ENCODE measurements at regions of chr20 and their contacts with region 1.

Region 1: DNA sequence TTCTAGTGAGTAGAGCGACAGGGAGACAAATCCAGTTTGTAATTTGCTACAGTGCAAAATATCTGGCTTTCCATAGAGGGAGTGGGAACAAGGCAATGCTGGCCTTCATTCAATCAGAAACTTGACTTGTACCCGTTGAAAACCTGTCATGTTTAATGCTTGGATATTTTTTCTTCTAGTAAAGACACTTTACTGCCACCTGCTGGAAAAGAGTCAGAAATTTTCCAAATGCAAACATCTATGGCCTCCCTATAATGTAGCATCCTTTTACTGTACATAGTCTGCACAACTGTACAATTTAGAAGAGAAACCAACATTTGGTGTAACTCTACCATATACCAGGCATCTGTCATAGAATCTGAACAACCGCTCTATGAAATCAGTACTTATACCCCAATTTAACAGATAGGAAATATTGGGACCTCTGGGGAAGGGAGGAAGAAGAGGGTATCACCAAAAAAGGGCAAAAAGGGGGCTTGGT is 16.7 kb upstream of the TBC1D20 start:
- DNase-seq: no peak
- H3K4me3 ChIP-seq: no peak overlapping the region
- H3K27ac ChIP-seq: no peak overlapping the region
- H3K4me1 ChIP-seq: no peaks in the 10 kb centered on the region
- H3K27me3 ChIP-seq: no peaks in the 10 kb centered on the region
- CTCF ChIP-seq: peak in 2 of 3 experiments; percentile 43 to 51; a peak in 2 of 4 replicates
- EP300 ChIP-seq: no peak
- POLR2A ChIP-seq: no peak
- RAD21 ChIP-seq: peak; percentile 50 to 60

Region 2: GRCh38 chr20:362271-363254 is 116.4 kb before region 1 on chr20:
- CTCF ChIA-PET with region 1: interaction called, 20 read pairs
- POLR2A ChIA-PET with region 1: interaction called, 3 read pairs
- DNase-seq: no peak
- H3K4me3 ChIP-seq: no peak overlapping the region
- H3K27ac ChIP-seq: no peak overlapping the region
- H3K4me1 ChIP-seq: no peaks in the 10 kb centered on the region; a peak in 2 of 7 replicates
- H3K27me3 ChIP-seq: no peaks in the 10 kb centered on the region
- CTCF ChIP-seq: peak; percentile 44 to 54 (median 49)
- EP300 ChIP-seq: no peak
- POLR2A ChIP-seq: no peak
- RAD21 ChIP-seq: peak; percentile 44 to 58

Region 3: DNA sequence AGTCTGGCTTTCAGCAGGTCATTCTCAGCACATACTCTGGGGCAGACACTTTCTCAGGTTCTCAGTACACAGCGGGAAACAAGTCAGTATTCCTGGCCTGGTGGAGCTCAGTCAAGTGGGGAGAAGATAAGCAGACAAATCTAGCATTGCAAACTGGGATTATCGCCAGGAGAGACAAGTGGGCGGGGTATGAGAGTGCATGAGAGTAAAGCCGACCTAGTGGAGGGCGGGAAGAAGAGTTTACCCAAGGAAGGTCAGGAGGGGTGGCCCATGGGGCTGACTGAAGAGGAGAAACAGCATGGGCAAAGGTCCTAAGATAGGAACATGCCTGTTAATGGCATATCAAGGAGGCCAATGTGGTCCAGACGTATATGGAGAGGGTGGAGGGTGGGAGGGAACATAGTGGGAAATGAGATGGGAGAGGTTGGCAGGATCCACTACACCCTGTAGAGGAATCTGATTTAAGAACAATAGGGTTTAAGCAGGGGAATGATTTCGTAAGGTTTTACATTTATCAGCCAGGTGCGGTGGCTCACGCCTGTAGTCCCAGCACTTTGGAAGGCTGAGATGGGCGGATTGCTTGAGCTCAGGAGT is 77.0 kb after region 1 on chr20:
- CTCF ChIA-PET with region 1: no interaction called
- POLR2A ChIA-PET with region 1: no interaction called
- DNase-seq: no peak
- H3K4me3 ChIP-seq: no peak overlapping the region
- H3K27ac ChIP-seq: no peak overlapping the region
- H3K4me1 ChIP-seq: no peaks in the 10 kb centered on the region
- H3K27me3 ChIP-seq: no peaks in the 10 kb centered on the region; a peak in 1 of 7 replicates
- CTCF ChIP-seq: no peak
- EP300 ChIP-seq: no peak
- POLR2A ChIP-seq: no peak
- RAD21 ChIP-seq: no peak